H1 (cell line): ENCODE measurements at regions of chr3 and their contacts with region 1.

Region 1: DNA sequence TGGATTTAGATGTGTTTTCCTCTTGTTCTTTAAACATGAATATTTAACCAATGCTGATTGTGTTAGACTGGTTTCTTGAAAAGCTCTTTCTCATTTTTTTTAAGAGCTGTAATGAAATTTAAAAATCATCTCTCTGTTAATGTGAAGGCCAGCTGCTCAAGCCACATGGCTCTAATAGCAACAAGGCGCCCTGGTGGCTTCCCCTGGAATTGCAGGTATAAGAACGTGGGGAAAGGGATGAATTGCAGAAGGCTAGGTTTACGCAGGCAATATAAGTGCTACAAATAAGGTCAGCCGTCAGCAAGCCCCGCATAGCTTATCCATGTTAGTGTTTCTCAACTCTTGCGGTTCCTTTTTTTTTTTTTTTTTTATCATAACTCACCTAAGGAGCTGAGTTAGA is 108.5 kb downstream of the SAMMSON start:
- DNase-seq: peak; percentile 41 to 82
- H3K4me3 ChIP-seq: no peak overlapping the region
- H3K27ac ChIP-seq: no peak overlapping the region
- H3K4me1 ChIP-seq: no peaks in the 10 kb centered on the region
- H3K27me3 ChIP-seq: no peaks in the 10 kb centered on the region
- CTCF ChIP-seq: peak; percentile 64 to 70 (median 65)
- EP300 ChIP-seq: no peak
- POLR2A ChIP-seq: no peak
- RAD21 ChIP-seq: peak; percentile 40 to 55; a peak in 3 of 4 replicates

Region 2: DNA sequence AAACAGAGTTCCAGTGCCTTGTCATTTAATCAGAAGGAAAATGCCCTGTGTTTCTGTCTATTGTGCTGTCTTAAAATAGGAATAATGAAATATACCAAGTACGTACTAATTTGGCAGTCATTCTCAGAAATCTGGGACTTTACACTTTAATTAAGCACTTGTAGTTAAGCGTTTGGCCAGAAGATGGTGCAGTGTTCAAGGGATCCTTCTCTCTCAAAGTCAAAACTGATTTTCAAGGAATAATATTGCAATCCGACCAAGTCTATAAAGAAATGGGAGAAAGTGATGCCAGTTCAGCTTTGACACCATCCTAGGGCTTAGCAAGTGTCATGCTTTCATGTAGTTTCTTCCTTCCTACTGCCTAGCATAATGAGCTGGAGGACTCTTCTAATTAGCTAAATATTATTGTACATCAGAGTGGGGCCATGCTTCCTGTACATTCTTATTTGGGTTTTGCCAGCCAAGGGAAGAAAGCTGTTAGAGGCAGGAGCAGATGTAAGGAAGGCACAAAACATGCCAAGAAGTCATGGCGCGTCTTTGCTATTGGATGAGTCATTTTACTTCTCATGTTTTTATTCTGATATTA is 43.8 kb before region 1 on chr3:
- CTCF ChIA-PET with region 1: interaction called, 14 read pairs
- POLR2A ChIA-PET with region 1: no interaction called
- DNase-seq: no peak
- H3K4me3 ChIP-seq: no peak overlapping the region
- H3K27ac ChIP-seq: no peak overlapping the region
- H3K4me1 ChIP-seq: no peaks in the 10 kb centered on the region
- H3K27me3 ChIP-seq: no peaks in the 10 kb centered on the region
- CTCF ChIP-seq: peak in 2 of 3 experiments; percentile 51 to 72; a peak in 2 of 4 replicates
- EP300 ChIP-seq: no peak
- POLR2A ChIP-seq: no peak
- RAD21 ChIP-seq: peak; percentile 83 to 85

Region 3: GRCh38 chr3:70078778-70079177 is 29.3 kb before region 1 on chr3:
- CTCF ChIA-PET with region 1: interaction called, 18 read pairs
- POLR2A ChIA-PET with region 1: no interaction called
- DNase-seq: no peak
- H3K4me3 ChIP-seq: no peak overlapping the region
- H3K27ac ChIP-seq: no peak overlapping the region
- H3K4me1 ChIP-seq: peaks cover 0 to 2% (median 0%) of the 10 kb centered on the region in 4 experiments; a peak in 1 of 7 replicates
- H3K27me3 ChIP-seq: no peaks in the 10 kb centered on the region
- CTCF ChIP-seq: no peak
- EP300 ChIP-seq: no peak
- POLR2A ChIP-seq: no peak
- RAD21 ChIP-seq: no peak

Region 4: GRCh38 chr3:70090322-70090913 is 17.7 kb before region 1 on chr3:
- CTCF ChIA-PET with region 1: interaction called, 205 read pairs
- POLR2A ChIA-PET with region 1: no interaction called
- DNase-seq: no peak
- H3K4me3 ChIP-seq: no peak overlapping the region
- H3K27ac ChIP-seq: no peak overlapping the region
- H3K4me1 ChIP-seq: no peaks in the 10 kb centered on the region
- H3K27me3 ChIP-seq: no peaks in the 10 kb centered on the region
- CTCF ChIP-seq: peak in 2 of 3 experiments; percentile 17 to 62; a peak in 2 of 4 replicates
- EP300 ChIP-seq: no peak
- POLR2A ChIP-seq: no peak
- RAD21 ChIP-seq: peak; percentile 67 to 75

Region 5: DNA sequence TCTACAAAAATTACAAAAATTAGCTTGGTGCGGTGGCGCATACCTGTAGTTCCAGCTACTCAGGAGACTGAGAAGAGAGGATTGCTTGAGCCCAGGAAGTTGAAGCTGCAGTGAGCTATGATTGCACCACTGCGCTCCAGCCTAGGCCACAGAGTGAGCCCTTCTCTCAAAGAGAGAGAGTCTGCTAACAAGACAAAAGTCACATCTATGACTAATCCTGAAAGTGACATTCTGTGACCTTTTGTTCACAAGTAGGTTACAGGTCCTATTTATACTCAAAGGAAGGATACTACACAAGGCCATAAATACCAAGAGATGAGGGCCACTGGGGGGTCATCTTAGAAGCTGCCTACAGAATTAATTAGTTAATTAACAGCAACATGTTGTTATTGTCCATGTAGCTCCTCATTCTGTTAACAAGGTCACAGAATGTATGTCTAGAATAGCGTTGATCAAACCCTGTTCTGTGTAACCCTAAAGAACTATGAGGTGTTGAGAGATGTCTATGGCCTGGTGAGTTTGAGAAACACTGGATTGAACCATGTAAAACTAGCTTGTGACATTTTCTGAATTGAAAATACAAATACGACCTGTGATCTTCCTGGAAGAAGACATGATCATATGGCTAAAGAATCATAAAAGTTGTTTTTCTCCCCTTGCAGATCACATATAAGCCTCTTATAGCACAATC is 11.6 kb before region 1 on chr3:
- CTCF ChIA-PET with region 1: interaction called, 205 read pairs
- POLR2A ChIA-PET with region 1: no interaction called
- DNase-seq: no peak
- H3K4me3 ChIP-seq: no peak overlapping the region
- H3K27ac ChIP-seq: no peak overlapping the region
- H3K4me1 ChIP-seq: no peaks in the 10 kb centered on the region
- H3K27me3 ChIP-seq: no peaks in the 10 kb centered on the region
- CTCF ChIP-seq: no peak
- EP300 ChIP-seq: no peak
- POLR2A ChIP-seq: no peak
- RAD21 ChIP-seq: no peak

Region 6: GRCh38 chr3:70120357-70121121 is 12.5 kb after region 1 on chr3:
- CTCF ChIA-PET with region 1: interaction called, 121 read pairs
- POLR2A ChIA-PET with region 1: no interaction called
- DNase-seq: peak; percentile 75 to 91
- H3K4me3 ChIP-seq: no peak overlapping the region
- H3K27ac ChIP-seq: no peak overlapping the region
- H3K4me1 ChIP-seq: no peaks in the 10 kb centered on the region
- H3K27me3 ChIP-seq: 0 out of 7 replicates have a peak, but pooled peaks cover 0 to 3% (median 0%) of the 10 kb centered on the region in 4 experiments
- CTCF ChIP-seq: peak; percentile 72 to 94 (median 86)
- EP300 ChIP-seq: no peak
- POLR2A ChIP-seq: no peak
- RAD21 ChIP-seq: peak; percentile 83 to 89